Mammary epithelial cell (primary cell): ENCODE measurements at regions of chr13 and their contacts with region 1.

Region 1: GRCh38 chr13:37869756-37870488 is at the start of gene TRPC4:
- DNase-seq: peak; percentile 58
- H3K4me3 ChIP-seq: peak within 1 kb of the TSS; percentile 34 to 50 (median 48)
- H3K27ac ChIP-seq: no peak within 1 kb of the TSS
- H3K4me1 ChIP-seq: peaks cover 21% of the 10 kb centered on the region
- H3K27me3 ChIP-seq: peaks cover 16% of the 10 kb centered on the region
- CTCF ChIP-seq: peak; percentile 58 to 86
- total RNA-seq, gene TRPC4: not detected

Region 2: GRCh38 chr13:37640499-37640898 is 229.4 kb before region 1 on chr13:
- CTCF ChIA-PET with region 1: no interaction called
- dilution Hi-C with region 1: no loop called
- in situ Hi-C with region 1: no loop called
- intact Hi-C with region 1: loop called (anchors 2 kb)
- DNase-seq: peak; percentile 21
- H3K4me3 ChIP-seq: no peak overlapping the region
- H3K27ac ChIP-seq: no peak overlapping the region
- H3K4me1 ChIP-seq: no peaks in the 10 kb centered on the region
- H3K27me3 ChIP-seq: no peaks in the 10 kb centered on the region
- CTCF ChIP-seq: peak; percentile 53 to 74

Region 3: DNA sequence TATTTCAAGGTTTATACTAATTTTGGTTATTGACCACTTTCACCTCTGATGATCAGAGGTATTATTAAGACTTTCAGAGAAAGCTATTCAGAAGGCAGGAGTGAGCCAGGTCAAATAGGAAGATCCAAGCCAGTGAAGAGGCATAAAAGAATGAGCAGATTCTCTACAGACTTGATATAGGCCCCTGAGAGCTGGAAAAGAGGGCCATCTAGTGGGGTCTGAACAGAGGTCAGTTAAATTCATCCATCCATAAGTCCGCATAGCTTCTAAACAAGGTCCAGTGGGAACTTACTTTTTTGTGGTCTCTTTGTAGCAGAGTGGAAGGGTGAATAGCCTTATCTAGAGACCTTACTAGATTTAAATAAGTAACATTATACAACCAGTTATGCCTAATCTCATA is 353.2 kb after region 1 on chr13:
- CTCF ChIA-PET with region 1: no interaction called
- dilution Hi-C with region 1: no loop called
- in situ Hi-C with region 1: no loop called
- intact Hi-C with region 1: loop called (anchors 2 kb)
- DNase-seq: no peak
- H3K4me3 ChIP-seq: no peak overlapping the region
- H3K27ac ChIP-seq: no peak overlapping the region
- H3K4me1 ChIP-seq: no peaks in the 10 kb centered on the region
- H3K27me3 ChIP-seq: no peaks in the 10 kb centered on the region
- CTCF ChIP-seq: peak in 1 of 2 donors; percentile 30

Region 4: GRCh38 chr13:38417727-38418126 is 547.8 kb after region 1 on chr13:
- CTCF ChIA-PET with region 1: no interaction called
- dilution Hi-C with region 1: no loop called
- in situ Hi-C with region 1: no loop called
- intact Hi-C with region 1: loop called (anchors 2 kb)
- DNase-seq: peak; percentile 50
- H3K4me3 ChIP-seq: no peak overlapping the region
- H3K27ac ChIP-seq: no peak overlapping the region
- H3K4me1 ChIP-seq: peaks cover 13% of the 10 kb centered on the region
- H3K27me3 ChIP-seq: no peaks in the 10 kb centered on the region
- CTCF ChIP-seq: peak; percentile 71 to 75

Region 5: DNA sequence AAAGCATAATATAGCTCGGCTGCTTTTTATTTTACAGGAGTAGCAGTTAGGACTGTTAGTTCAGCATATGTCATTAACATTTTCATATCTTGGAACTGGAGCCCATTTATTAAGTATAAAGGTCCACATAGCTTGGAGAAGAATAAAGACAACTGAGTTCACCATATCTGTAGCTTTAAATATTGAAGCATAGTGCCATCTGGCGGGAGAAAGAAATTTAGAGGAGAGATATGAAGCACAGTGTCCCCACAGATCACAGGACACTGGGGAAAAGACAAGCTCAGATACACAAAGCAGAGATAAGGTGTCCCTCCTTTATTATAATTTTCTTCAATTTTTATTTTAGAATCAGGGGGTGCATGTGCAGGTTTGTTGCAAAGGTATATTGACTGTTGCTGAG is 712.2 kb after region 1 on chr13:
- CTCF ChIA-PET with region 1: interaction called, 7 read pairs
- dilution Hi-C with region 1: no loop called
- in situ Hi-C with region 1: no loop called
- intact Hi-C with region 1: loop called (anchors 2 kb)
- DNase-seq: peak; percentile 44
- H3K4me3 ChIP-seq: no peak overlapping the region
- H3K27ac ChIP-seq: no peak overlapping the region
- H3K4me1 ChIP-seq: no peaks in the 10 kb centered on the region
- H3K27me3 ChIP-seq: no peaks in the 10 kb centered on the region
- CTCF ChIP-seq: peak; percentile 38 to 56